ENCODE measurements at regions of chr4 and their contacts with region 1.

Region 1: DNA sequence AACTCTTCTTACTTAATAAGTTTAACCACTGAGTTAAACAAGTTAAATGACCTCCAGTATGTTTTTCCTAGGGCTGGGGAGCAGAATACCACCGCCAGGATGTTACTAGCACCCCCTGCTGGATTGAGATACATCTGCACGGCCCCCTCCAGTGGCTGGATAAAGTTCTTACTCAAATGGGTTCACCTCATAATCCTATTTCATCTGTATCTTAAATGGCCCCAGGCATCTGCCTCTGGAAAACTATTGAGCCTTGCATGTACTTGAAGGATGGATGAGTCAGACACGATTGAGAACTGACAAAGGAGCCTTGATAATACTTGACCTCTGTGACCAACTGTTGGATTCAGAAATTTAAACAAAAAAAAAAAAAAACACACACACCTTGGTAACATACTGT is 61.5 kb upstream of the MMAA start:
- DNase-seq: peak in 4 of 5 donors; percentile 12 to 36 (median 20)
- H3K4me3 ChIP-seq: no peak overlapping the region
- H3K4me3 Mint-ChIP-seq: no peak overlapping the region
- H3K27ac ChIP-seq: no peak overlapping the region
- H3K27ac Mint-ChIP-seq: no peak overlapping the region
- H3K4me1 ChIP-seq: no peaks in the 10 kb centered on the region
- H3K4me1 Mint-ChIP-seq: peaks cover 0 to under 1% (median 0%) of the 10 kb centered on the region in 4 donors
- H3K27me3 ChIP-seq: no peaks in the 10 kb centered on the region
- H3K27me3 Mint-ChIP-seq: peaks cover 7 to 9% of the 10 kb centered on the region in 2 donors

Region 2: DNA sequence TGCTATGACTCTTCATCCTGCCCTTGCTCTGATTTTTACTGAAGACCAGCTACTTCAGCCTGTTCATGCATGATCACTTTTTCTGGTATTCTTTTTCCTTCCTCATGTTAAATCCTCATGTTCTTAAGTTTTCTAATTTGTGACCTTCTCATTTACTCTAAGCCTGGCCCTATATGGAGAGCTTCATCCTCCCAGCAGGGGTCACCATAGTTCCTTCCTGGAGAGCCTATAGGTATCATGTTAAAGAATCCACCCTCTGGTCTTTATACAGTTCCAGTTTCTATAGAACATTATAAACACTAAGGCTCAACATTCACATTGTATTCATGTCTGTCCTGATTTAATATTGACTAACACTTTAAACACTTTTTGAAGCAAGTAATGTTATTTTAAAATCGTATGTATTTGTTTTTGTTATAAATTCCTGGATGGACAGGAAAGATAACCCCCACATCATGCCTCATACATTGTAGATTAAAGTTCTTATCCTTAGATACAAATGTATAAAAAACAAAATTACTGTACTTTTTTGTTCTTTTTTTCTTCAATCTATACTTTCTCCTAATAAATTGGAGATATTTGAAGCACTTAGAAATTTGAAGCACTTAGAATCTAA is 323.5 kb before region 1 on chr4:
- CTCF ChIA-PET with region 1: interaction called, 4 read pairs
- POLR2A ChIA-PET with region 1: no interaction called
- intact Hi-C with region 1: loop called (anchors 1 kb)
- DNase-seq: peak; percentile 31 to 55 (median 43)
- H3K4me3 ChIP-seq: no peak overlapping the region
- H3K4me3 Mint-ChIP-seq: no peak overlapping the region
- H3K27ac ChIP-seq: no peak overlapping the region
- H3K27ac Mint-ChIP-seq: no peak overlapping the region
- H3K4me1 ChIP-seq: no peaks in the 10 kb centered on the region
- H3K4me1 Mint-ChIP-seq: no peaks in the 10 kb centered on the region
- H3K27me3 ChIP-seq: no peaks in the 10 kb centered on the region
- H3K27me3 Mint-ChIP-seq: peaks cover 0 to 10% of the 10 kb centered on the region in 2 donors

Region 3: GRCh38 chr4:145623831-145624230 is 66.1 kb after region 1 on chr4:
- CTCF ChIA-PET with region 1: no interaction called
- POLR2A ChIA-PET with region 1: no interaction called
- intact Hi-C with region 1: no loop called
- DNase-seq: no peak
- H3K4me3 ChIP-seq: no peak overlapping the region
- H3K4me3 Mint-ChIP-seq: no peak overlapping the region
- H3K27ac ChIP-seq: no peak overlapping the region
- H3K27ac Mint-ChIP-seq: no peak overlapping the region
- H3K4me1 ChIP-seq: peaks cover 19% of the 10 kb centered on the region
- H3K4me1 Mint-ChIP-seq: peaks cover 30 to 44% (median 33%) of the 10 kb centered on the region in 4 donors
- H3K27me3 ChIP-seq: no peaks in the 10 kb centered on the region
- H3K27me3 Mint-ChIP-seq: no peaks in the 10 kb centered on the region

Region 4: DNA sequence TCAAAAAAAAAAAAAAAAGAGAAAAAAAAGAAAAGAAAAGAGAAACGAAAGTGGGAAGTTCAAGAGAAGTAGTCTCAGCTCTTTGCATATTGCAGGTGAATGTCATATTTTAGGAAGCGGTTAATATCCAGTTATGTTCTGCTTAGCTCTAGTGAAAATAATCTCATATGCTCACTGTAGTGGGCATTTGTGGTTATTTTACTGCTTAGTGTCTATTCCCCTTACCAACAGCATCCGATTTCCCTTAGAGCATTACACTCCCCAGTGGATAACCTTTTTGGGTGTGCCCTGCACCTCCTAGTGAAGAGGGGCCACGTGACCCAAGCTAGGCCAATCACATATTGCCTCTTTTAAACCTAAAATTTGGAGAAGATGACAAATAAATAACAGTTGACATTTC is 492.1 kb after region 1 on chr4:
- CTCF ChIA-PET with region 1: no interaction called
- POLR2A ChIA-PET with region 1: no interaction called
- intact Hi-C with region 1: no loop called
- DNase-seq: no peak
- H3K4me3 ChIP-seq: no peak overlapping the region
- H3K4me3 Mint-ChIP-seq: no peak overlapping the region
- H3K27ac ChIP-seq: no peak overlapping the region
- H3K27ac Mint-ChIP-seq: no peak overlapping the region
- H3K4me1 ChIP-seq: no peaks in the 10 kb centered on the region
- H3K4me1 Mint-ChIP-seq: no peaks in the 10 kb centered on the region
- H3K27me3 ChIP-seq: no peaks in the 10 kb centered on the region
- H3K27me3 Mint-ChIP-seq: peaks cover 10 to 11% of the 10 kb centered on the region in 2 donors

Measured in CD4-positive, alpha-beta memory T cell (primary cell).